MCF 10A (cell line): ENCODE measurements at regions of chr18 and their contacts with region 1.

Region 1: DNA sequence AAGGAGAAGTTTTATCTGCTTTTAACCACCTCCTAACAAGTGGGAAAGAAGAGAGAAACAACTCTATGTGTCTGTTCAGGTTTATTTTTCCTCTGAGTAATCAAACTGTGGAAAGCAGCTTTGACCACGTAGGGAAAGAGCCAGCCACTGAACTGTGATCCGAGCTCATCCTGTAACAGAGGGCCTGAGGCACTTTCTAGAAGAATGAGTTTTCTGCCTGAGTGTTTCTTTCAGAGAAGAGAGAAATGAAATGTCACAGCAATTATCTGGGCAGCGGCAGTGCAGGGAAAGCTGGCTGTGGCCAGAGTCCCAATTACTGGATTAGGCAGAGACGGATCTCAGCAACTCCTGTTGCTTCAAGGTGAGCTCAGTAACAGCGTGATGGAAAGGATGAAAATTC is 151.9 kb downstream of the CD226 start:
- DNase-seq: no peak
- H3K4me3 Mint-ChIP-seq: no peak overlapping the region
- H3K27ac Mint-ChIP-seq: no peak overlapping the region
- H3K4me1 Mint-ChIP-seq: no peaks in the 10 kb centered on the region
- H3K27me3 Mint-ChIP-seq: peaks cover 40% of the 10 kb centered on the region
- CTCF ChIP-seq: no peak

Region 2: GRCh38 chr18:69736730-69737129 is 59.1 kb before region 1 on chr18:
- CTCF ChIA-PET with region 1: no interaction called
- POLR2A ChIA-PET with region 1: no interaction called
- intact Hi-C with region 1: no loop called
- DNase-seq: no peak
- H3K4me3 Mint-ChIP-seq: no peak overlapping the region
- H3K27ac Mint-ChIP-seq: no peak overlapping the region
- H3K4me1 Mint-ChIP-seq: no peaks in the 10 kb centered on the region
- H3K27me3 Mint-ChIP-seq: peaks cover 16% of the 10 kb centered on the region
- CTCF ChIP-seq: no peak

Region 3: DNA sequence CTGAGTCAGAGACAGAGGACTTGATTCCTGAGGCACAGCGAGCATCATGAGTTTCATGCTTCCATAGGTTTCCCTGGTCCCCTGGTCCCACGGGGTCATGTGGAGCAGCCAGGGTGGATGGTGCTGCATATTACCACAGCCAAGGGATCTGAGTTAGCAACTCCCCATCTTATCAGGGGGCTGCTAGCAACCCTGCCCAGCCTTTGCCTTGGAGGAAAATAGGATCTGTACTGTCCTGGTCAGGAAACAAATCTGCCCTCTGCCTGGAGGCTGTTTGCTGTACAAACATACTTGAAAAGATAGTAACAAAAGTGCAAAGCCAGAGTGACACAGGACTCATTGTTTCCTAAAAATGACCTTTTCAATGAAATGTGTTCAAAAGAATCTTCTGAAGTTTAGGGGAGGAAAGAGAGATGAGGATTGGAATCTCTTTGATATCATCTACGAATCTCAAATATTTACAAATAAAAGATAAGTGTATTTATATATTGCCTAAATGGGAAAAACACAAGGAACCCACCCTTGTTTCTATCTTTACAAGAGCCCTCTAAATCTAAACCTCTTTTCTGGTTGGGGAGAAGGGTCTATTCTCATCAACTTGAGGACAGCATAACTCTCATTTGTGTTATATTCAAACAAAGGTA is 42.9 kb before region 1 on chr18:
- CTCF ChIA-PET with region 1: no interaction called
- POLR2A ChIA-PET with region 1: no interaction called
- intact Hi-C with region 1: loop called (anchors 2 kb)
- DNase-seq: no peak
- H3K4me3 Mint-ChIP-seq: no peak overlapping the region
- H3K27ac Mint-ChIP-seq: no peak overlapping the region
- H3K4me1 Mint-ChIP-seq: no peaks in the 10 kb centered on the region
- H3K27me3 Mint-ChIP-seq: peaks cover 24% of the 10 kb centered on the region
- CTCF ChIP-seq: no peak

Region 4: GRCh38 chr18:69770238-69770637 is 25.6 kb before region 1 on chr18:
- CTCF ChIA-PET with region 1: no interaction called
- POLR2A ChIA-PET with region 1: no interaction called
- intact Hi-C with region 1: no loop called
- DNase-seq: no peak
- H3K4me3 Mint-ChIP-seq: no peak overlapping the region
- H3K27ac Mint-ChIP-seq: no peak overlapping the region
- H3K4me1 Mint-ChIP-seq: no peaks in the 10 kb centered on the region
- H3K27me3 Mint-ChIP-seq: peaks cover 34% of the 10 kb centered on the region
- CTCF ChIP-seq: no peak